ENCODE measurements at regions of chr13 and their contacts with region 1.

Region 1: GRCh38 chr13:58919551-58919950 is 1244.2 kb downstream of the DIAPH3 start:
- DNase-seq: no peak
- ATAC-seq: no peak
- H3K4me3 ChIP-seq: no peak overlapping the region
- H3K27ac ChIP-seq: no peak overlapping the region
- H3K4me1 ChIP-seq: peaks cover 0 to 4% (median 0%) of the 10 kb centered on the region in 9 donors
- H3K27me3 ChIP-seq: no peaks in the 10 kb centered on the region
- CTCF ChIP-seq: no peak

Region 2: GRCh38 chr13:58907347-58907746 is 12.2 kb before region 1 on chr13:
- intact Hi-C with region 1: loop called in 1 of 10 experiments (anchors 1 kb)
- DNase-seq: no peak
- ATAC-seq: no peak
- H3K4me3 ChIP-seq: no peak overlapping the region
- H3K27ac ChIP-seq: no peak overlapping the region
- H3K4me1 ChIP-seq: peaks cover 0 to 7% (median 0%) of the 10 kb centered on the region in 9 donors
- H3K27me3 ChIP-seq: no peaks in the 10 kb centered on the region
- CTCF ChIP-seq: peak in 2 of 9 donors; percentile 15 to 21

Region 3: GRCh38 chr13:58989556-58989955 is 70.0 kb after region 1 on chr13:
- intact Hi-C with region 1: no loop called
- DNase-seq: no peak
- ATAC-seq: no peak
- H3K4me3 ChIP-seq: no peak overlapping the region
- H3K27ac ChIP-seq: no peak overlapping the region
- H3K4me1 ChIP-seq: peaks cover 0 to 7% (median 0%) of the 10 kb centered on the region in 9 donors
- H3K27me3 ChIP-seq: no peaks in the 10 kb centered on the region
- CTCF ChIP-seq: no peak

Measured in heart right ventricle (tissue), 16 donors.